Dorsolateral prefrontal cortex (tissue), 120 donors: ENCODE measurements at regions of chr6 and their contacts with region 1.

Region 1: DNA sequence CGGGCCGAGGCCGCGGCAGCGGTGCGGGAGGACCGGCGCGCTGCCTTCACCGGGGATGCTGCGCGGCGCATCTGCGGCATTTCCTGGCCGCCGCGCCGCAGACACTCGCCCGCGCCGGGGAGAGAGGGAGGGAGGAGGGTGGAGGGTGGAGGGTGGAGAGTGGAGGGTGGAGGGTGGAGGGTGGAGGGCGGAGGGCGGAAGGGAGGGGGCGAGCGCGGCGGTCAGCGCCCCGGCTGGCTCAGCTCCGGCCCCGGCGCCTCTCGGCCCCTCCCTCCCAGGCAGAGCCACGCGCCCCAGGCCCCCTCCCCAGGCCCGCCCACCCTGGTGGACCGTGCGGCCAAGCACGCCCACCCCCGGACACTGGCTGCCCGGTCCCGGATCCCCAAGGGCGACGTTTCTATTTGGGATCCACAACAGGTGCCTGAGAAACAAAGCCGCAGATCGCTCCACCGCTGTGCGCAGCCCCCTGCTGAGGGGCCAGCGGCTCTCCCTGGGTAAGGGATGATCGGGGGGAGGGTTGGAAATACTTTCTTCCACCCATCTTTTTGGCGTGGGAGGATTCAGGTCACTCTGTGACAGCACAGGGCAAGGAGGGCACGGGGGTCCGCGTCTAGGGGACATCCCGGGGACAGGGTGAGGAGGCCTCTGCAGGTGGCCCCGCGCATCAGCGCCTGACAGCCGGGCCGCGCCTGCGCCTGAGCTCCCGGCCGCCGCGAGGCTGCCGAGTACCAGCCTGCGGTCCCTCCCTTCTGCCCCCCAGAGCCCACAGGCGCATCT is 111.1 kb upstream of the BEND6 start:
- DNase-seq: peak; percentile 72 to 91 (median 82)
- H3K4me3 ChIP-seq: peak overlapping the region; percentile 63 to 93 (median 80)
- H3K27ac ChIP-seq: peak overlapping the region; percentile 82 to 99 (median 95)
- H3K27me3 ChIP-seq: no peaks in the 10 kb centered on the region
- CTCF ChIP-seq: peak in 49 of 56 donors; percentile 48 to 87 (median 74)

Region 2: DNA sequence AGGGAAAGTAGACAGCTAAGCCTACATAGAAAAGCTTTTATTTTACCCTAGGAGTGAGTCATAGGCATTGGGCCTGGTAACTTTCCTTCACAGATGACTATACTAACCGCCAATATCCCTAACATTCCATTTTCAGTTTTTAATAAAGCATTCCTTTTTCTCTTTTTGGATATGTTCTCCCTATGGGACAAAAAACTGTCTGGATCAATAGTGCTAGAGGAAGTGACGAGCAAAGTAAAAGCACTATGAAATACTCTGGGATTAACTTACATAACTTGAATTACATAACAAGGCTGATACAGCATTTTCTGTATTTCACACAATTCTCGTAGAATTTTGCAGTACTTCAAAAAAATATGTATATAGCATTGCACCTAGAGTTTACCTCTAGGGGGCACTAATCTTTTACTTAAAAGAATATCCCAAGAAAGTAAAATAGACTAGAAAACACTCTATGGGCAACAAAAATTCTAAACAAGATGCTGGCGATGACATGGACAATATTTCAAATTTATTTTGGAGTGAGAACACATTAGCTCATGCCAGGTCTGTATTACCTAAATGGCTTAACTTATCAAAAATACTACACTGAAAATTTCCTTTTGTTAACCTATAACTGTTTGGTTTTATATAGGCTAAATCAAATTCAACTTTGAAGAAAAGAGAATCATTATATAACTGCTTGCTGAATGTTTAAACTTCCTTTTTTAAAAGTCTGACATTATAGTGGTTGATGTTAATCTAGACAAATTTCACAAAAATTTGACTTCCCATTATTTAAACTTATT is 134.8 kb before region 1 on chr6:
- intact Hi-C with region 1: loop called in 1 of 2 experiments (anchors 5 kb)
- DNase-seq: no peak
- H3K4me3 ChIP-seq: peak overlapping the region in 8 of 59 donors; percentile 0 to 20 (median 11)
- H3K27ac ChIP-seq: peak overlapping the region; percentile 40 to 95 (median 88)
- H3K27me3 ChIP-seq: no peaks in the 10 kb centered on the region
- CTCF ChIP-seq: peak; percentile 46 to 88 (median 73)

Region 3: DNA sequence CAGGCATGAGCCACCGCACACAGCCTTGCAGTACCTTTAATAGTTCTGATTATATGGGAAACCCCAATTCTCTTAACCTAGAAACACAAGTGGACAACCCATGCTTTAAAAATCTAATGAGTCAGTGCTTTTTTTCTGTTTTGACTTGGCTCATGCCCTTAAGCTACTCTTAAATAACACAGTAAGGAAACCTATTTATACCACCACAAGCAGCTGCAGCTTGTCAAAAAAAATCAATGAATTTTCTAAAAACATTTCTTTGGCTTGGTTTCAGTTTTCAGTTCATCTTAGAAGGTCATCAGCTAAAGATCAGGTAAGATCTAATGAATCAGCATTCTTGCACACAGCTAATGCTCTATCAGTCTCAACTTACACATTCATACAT is 77.0 kb before region 1 on chr6:
- intact Hi-C with region 1: loop called in 1 of 2 experiments (anchors 5 kb)
- DNase-seq: no peak
- H3K4me3 ChIP-seq: no peak overlapping the region
- H3K27ac ChIP-seq: peak overlapping the region in 47 of 59 donors; percentile 2 to 81 (median 56)
- H3K27me3 ChIP-seq: no peaks in the 10 kb centered on the region
- CTCF ChIP-seq: no peak

Region 4: GRCh38 chr6:56808871-56809359 is 34.8 kb before region 1 on chr6:
- intact Hi-C with region 1: loop called in 1 of 2 experiments (anchors 5 kb)
- DNase-seq: peak in 1 of 10 donors; percentile 9
- H3K4me3 ChIP-seq: no peak overlapping the region
- H3K27ac ChIP-seq: peak overlapping the region in 25 of 59 donors; percentile 1 to 69 (median 50)
- H3K27me3 ChIP-seq: no peaks in the 10 kb centered on the region
- CTCF ChIP-seq: no peak

Region 5: DNA sequence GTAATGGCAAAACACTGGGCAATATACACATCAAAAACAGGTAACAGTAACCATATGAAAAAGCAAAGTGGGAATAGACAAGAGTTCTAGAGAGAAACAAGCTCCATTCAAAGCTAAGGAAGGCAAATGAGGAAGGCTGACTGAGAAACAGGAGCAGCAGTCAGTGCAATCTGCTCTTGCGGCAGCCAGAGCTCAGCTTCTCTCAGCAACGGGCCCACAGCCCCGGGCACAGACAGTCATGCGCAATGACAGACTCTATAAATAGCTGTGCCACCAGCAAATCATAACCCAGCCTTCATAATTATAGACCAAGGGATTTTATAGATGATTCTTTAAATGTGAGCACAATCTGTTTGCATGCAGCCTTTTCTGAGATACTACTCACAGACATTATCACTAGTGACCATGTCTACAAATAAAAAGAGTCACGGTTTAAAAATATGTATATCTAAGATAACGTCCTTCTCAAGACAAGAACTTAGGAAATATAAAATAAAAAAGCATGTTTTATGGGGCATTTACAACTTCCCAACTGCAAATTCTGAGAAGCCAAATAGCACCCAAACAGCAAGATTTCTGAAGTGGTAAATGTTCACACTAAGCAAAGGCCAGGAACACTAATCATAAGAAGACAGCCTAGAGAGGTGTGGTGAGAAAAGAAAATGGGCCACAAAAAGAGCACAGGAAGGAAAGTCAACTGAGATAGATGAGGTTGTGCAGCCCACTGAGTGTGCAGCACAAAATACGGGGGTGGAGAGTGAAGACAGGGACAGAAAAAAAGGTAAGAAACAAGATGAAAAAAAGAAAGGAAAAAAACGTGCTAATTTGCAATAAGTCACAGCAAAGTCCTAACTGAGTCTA is 71.3 kb after region 1 on chr6:
- intact Hi-C with region 1: no loop called
- DNase-seq: peak; percentile 41 to 89 (median 76)
- H3K4me3 ChIP-seq: peak overlapping the region in 10 of 59 donors; percentile 1 to 24 (median 8)
- H3K27ac ChIP-seq: peak overlapping the region in 52 of 59 donors; percentile 5 to 86 (median 52)
- H3K27me3 ChIP-seq: no peaks in the 10 kb centered on the region
- CTCF ChIP-seq: no peak

Region 6: GRCh38 chr6:57130661-57131177 is 287.0 kb after region 1 on chr6:
- intact Hi-C with region 1: no loop called
- DNase-seq: no peak
- H3K4me3 ChIP-seq: no peak overlapping the region
- H3K27ac ChIP-seq: no peak overlapping the region
- H3K27me3 ChIP-seq: no peaks in the 10 kb centered on the region
- CTCF ChIP-seq: no peak